MCF 10A (cell line): ENCODE measurements at regions of chr2 and their contacts with region 1.

Region 1: GRCh38 chr2:64653349-64654062 is at the start of gene SERTAD2:
- DNase-seq: peak; percentile 86
- H3K4me3 Mint-ChIP-seq: peak within 1 kb of the TSS; percentile 77
- H3K27ac Mint-ChIP-seq: peak within 1 kb of the TSS; percentile 89
- H3K4me1 Mint-ChIP-seq: peaks cover 22% of the 10 kb centered on the region
- H3K27me3 Mint-ChIP-seq: no peaks in the 10 kb centered on the region
- CTCF ChIP-seq: no peak
- total RNA-seq, gene SERTAD2: 15.0 and 21.6 TPM in 2 replicates

Region 2: DNA sequence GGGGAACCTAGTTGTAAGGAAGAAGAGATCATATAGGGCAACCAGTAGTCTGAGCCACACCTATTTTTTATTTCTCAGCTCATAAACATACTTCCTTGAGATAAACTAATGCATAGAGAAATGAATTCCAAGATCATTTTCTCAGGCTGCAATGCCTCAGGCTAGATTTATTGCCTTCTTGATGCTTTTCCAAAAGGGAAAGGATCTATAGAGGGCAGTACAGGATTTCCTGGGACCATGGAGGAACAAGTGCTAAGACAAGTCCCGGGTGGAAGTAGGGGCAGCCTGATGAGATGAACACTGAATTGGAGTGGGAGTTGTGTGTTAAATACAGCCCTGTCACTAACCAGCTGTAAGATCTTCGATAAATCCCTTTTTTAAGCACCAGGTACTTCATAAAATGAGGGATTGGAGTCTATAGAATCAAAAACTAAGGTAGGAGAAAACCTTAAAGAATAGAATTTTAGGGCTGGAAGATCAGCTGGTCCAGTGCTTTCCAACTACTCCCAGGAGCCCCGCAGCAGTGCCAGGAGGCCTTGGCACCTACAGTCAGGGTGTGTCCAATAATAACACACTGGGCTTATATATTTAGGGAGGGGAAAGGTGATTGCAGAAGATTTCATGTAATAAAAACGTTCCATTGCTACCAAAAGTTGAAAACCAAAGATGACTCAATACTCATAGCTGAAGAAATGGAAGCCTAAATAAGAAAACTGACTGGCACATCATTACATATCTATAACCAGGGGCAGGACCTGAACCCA is 57.9 kb before region 1 on chr2:
- CTCF ChIA-PET with region 1: interaction called, 8 read pairs
- POLR2A ChIA-PET with region 1: interaction called, 27 read pairs
- intact Hi-C with region 1: loop called (anchors 2 kb)
- DNase-seq: peak; percentile 50
- H3K4me3 Mint-ChIP-seq: no peak overlapping the region
- H3K27ac Mint-ChIP-seq: peak overlapping the region; percentile 96
- H3K4me1 Mint-ChIP-seq: peaks cover 36% of the 10 kb centered on the region
- H3K27me3 Mint-ChIP-seq: no peaks in the 10 kb centered on the region
- CTCF ChIP-seq: no peak

Region 3: GRCh38 chr2:64685438-64685837 is 31.9 kb after region 1 on chr2:
- CTCF ChIA-PET with region 1: no interaction called
- POLR2A ChIA-PET with region 1: interaction called, 15 read pairs
- intact Hi-C with region 1: no loop called
- DNase-seq: peak; percentile 84
- H3K4me3 Mint-ChIP-seq: peak overlapping the region; percentile 56
- H3K27ac Mint-ChIP-seq: no peak overlapping the region
- H3K4me1 Mint-ChIP-seq: peaks cover 24% of the 10 kb centered on the region
- H3K27me3 Mint-ChIP-seq: no peaks in the 10 kb centered on the region
- CTCF ChIP-seq: no peak

Region 4: GRCh38 chr2:64767670-64768468 is 114.4 kb after region 1 on chr2:
- CTCF ChIA-PET with region 1: interaction called, 4 read pairs
- POLR2A ChIA-PET with region 1: interaction called, 49 read pairs
- intact Hi-C with region 1: no loop called
- DNase-seq: peak; percentile 82
- H3K4me3 Mint-ChIP-seq: peak overlapping the region; percentile 74
- H3K27ac Mint-ChIP-seq: peak overlapping the region; percentile 87
- H3K4me1 Mint-ChIP-seq: peaks cover 31% of the 10 kb centered on the region
- H3K27me3 Mint-ChIP-seq: no peaks in the 10 kb centered on the region
- CTCF ChIP-seq: no peak

Region 5: DNA sequence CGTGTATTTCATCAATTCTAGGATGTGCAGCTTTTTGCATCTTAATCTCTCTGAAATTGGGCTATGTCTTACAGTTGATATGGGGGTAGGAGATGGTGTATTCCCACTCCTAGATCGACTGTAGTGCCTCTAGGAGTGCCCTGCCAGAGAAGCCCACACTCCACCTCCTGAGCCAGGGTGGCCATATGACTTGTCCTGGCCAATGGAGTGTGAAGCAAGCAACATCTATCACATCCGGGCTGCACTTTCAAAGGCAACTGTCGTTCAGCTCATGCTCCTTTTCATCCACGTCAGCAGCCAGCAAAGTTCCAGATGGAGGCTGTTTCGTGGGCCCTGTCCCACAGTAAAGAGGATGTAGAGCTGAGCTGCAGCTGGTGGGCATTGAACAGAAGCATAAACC is 186.3 kb after region 1 on chr2:
- CTCF ChIA-PET with region 1: interaction called, 5 read pairs
- POLR2A ChIA-PET with region 1: interaction called, 15 read pairs
- intact Hi-C with region 1: loop called (anchors 10 kb)
- DNase-seq: no peak
- H3K4me3 Mint-ChIP-seq: no peak overlapping the region
- H3K27ac Mint-ChIP-seq: no peak overlapping the region
- H3K4me1 Mint-ChIP-seq: peaks cover 41% of the 10 kb centered on the region
- H3K27me3 Mint-ChIP-seq: no peaks in the 10 kb centered on the region
- CTCF ChIP-seq: no peak

Region 6: DNA sequence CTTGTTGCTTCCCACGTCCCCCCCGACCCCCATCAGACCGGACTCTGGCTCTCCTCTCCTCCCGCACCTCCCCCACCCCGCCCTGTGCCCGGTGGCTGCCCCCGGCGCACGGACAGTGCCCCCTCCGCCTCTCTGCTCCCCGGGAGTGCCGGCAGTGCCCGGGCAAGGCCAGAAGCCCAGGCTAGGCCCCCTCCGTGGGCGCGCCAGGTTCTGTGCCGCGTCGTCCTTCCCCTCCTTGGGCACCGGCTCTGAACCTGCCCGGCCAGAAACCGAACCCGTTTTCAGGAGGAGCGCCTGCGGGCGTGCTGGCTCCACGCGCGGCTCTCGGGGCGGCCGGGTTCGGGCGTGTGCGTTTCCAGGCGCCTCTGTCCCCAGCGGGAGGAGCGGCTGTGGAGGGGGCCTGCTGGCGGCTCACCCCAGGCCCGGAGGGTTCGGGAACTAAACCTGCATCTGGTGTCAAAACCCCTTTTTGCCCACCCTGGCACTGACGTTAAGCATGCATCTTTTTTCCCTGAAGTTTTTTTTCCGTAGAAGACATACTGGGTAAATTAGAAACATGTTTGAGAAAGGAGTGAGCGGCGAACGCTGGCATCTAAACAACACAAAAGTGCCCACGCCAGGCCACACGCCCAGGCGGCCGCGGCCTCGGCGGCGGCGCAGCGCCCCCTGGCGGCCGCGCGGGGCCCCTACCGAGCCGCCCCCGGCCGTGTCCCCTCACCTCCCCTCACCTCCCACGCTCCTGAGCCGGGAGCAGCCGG is 211.7 kb after region 1 on chr2:
- CTCF ChIA-PET with region 1: interaction called, 18 read pairs
- POLR2A ChIA-PET with region 1: interaction called, 178 read pairs
- intact Hi-C with region 1: no loop called
- DNase-seq: peak; percentile 68
- H3K4me3 Mint-ChIP-seq: peak overlapping the region; percentile 64
- H3K27ac Mint-ChIP-seq: no peak overlapping the region
- H3K4me1 Mint-ChIP-seq: peaks cover 7% of the 10 kb centered on the region
- H3K27me3 Mint-ChIP-seq: no peaks in the 10 kb centered on the region
- CTCF ChIP-seq: peak; percentile 86